CD4-positive, alpha-beta T cell (primary cell): ENCODE measurements at regions of chr1 and their contacts with region 1.

Region 1: DNA sequence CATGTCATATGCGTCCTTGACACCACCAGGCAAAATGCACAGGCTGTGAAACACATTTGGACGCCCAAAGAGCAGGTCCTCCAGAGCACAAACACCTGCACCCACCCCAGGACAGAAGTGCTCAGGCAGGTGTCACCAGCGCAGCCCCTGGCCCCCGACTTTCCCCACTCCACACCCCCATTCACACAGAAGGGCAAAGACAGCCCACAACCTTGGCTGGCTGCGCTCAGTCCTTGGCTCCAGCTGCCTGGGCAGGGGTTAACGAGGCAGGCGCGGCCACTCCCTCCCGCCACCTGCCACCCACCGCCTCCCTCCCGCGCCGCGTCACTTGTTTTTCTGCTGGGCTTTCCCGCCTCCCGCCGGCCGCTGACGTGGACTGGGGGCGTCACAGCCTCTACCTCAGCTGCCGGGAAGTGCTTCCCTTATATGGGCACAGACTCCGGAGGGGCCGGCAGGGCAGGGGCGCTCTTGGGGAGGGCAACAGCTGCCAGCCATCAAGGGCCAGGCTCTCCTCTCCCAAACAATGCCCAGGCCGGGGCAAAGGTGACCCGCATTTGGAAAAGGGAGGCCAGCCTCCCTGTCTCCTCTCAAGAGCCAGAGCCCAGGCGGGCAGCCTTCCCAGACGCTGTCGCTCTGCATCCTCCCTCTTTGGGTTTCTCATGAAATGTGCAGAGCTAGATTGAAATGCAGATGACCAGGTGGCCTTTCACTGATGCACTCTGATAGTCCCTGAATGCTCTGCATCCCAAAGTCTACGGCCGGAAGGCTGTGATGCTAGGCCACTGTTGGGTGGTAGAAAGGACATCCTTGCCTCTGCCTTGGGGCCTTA is 14.8 kb upstream of the BTG2 start:
- DNase-seq: peak; percentile 95 to 99 (median 98)
- ATAC-seq: peak; percentile 55
- H3K4me3 ChIP-seq: peak overlapping the region; percentile 52
- H3K4me3 Mint-ChIP-seq: peak overlapping the region; percentile 88
- H3K27ac ChIP-seq: peak overlapping the region; percentile 99
- H3K27ac Mint-ChIP-seq: peak overlapping the region; percentile 100
- H3K4me1 ChIP-seq: peaks cover 63% of the 10 kb centered on the region
- H3K4me1 Mint-ChIP-seq: peaks cover 91% of the 10 kb centered on the region
- H3K27me3 ChIP-seq: no peaks in the 10 kb centered on the region
- H3K27me3 Mint-ChIP-seq: no peaks in the 10 kb centered on the region
- CTCF ChIP-seq: no peak

Region 2: GRCh38 chr1:203320591-203321272 is 30.3 kb after region 1 on chr1:
- CTCF ChIA-PET with region 1: interaction called, 17 read pairs
- POLR2A ChIA-PET with region 1: interaction called, 569 read pairs
- intact Hi-C with region 1: no loop called
- DNase-seq: peak; percentile 47 to 95 (median 78)
- ATAC-seq: peak; percentile 70
- H3K4me3 ChIP-seq: peak overlapping the region; percentile 13
- H3K4me3 Mint-ChIP-seq: peak overlapping the region; percentile 82
- H3K27ac ChIP-seq: peak overlapping the region; percentile 98 to 99
- H3K27ac Mint-ChIP-seq: peak overlapping the region; percentile 92
- H3K4me1 ChIP-seq: peaks cover 82% of the 10 kb centered on the region
- H3K4me1 Mint-ChIP-seq: peaks cover 93% of the 10 kb centered on the region
- H3K27me3 ChIP-seq: no peaks in the 10 kb centered on the region
- H3K27me3 Mint-ChIP-seq: no peaks in the 10 kb centered on the region
- CTCF ChIP-seq: no peak

Region 3: GRCh38 chr1:203326830-203327683 is 36.6 kb after region 1 on chr1:
- CTCF ChIA-PET with region 1: interaction called, 32 read pairs
- POLR2A ChIA-PET with region 1: interaction called, 569 read pairs
- intact Hi-C with region 1: loop called in 1 of 2 experiments (anchors 1 kb)
- DNase-seq: peak; percentile 89 to 97 (median 94)
- ATAC-seq: peak; percentile 65
- H3K4me3 ChIP-seq: peak overlapping the region; percentile 66
- H3K4me3 Mint-ChIP-seq: peak overlapping the region; percentile 81
- H3K27ac ChIP-seq: peak overlapping the region; percentile 98 to 99
- H3K27ac Mint-ChIP-seq: peak overlapping the region; percentile 92
- H3K4me1 ChIP-seq: peaks cover 67% of the 10 kb centered on the region
- H3K4me1 Mint-ChIP-seq: peaks cover 72% of the 10 kb centered on the region
- H3K27me3 ChIP-seq: no peaks in the 10 kb centered on the region
- H3K27me3 Mint-ChIP-seq: no peaks in the 10 kb centered on the region
- CTCF ChIP-seq: no peak